ENCODE measurements at regions of chr9 and their contacts with region 1.

Region 1: GRCh38 chr9:114662081-114662989 is 4.7 kb upstream of the TEX53 start:
- DNase-seq: peak; percentile 72
- ATAC-seq: peak; percentile 94
- H3K4me3 ChIP-seq: no peak overlapping the region
- H3K4me3 Mint-ChIP-seq: no peak overlapping the region
- H3K27ac ChIP-seq: no peak overlapping the region
- H3K27ac Mint-ChIP-seq: no peak overlapping the region
- H3K4me1 ChIP-seq: peaks cover 0 to 6% of the 10 kb centered on the region in 2 donors
- H3K4me1 Mint-ChIP-seq: peaks cover 6% of the 10 kb centered on the region
- H3K27me3 ChIP-seq: no peaks in the 10 kb centered on the region
- H3K27me3 Mint-ChIP-seq: peaks cover 5% of the 10 kb centered on the region
- CTCF ChIP-seq: peak; percentile 85

Region 2: GRCh38 chr9:114538241-114538640 is 124.1 kb before region 1 on chr9:
- CTCF ChIA-PET with region 1: interaction called, 3 read pairs
- POLR2A ChIA-PET with region 1: interaction called, 5 read pairs
- intact Hi-C with region 1: loop called (anchors 5 kb)
- DNase-seq: peak; percentile 74
- ATAC-seq: peak; percentile 99
- H3K4me3 ChIP-seq: no peak overlapping the region
- H3K4me3 Mint-ChIP-seq: no peak overlapping the region
- H3K27ac ChIP-seq: peak overlapping the region in 1 of 2 donors; percentile 0
- H3K27ac Mint-ChIP-seq: peak overlapping the region; percentile 38
- H3K4me1 ChIP-seq: peaks cover 8 to 13% of the 10 kb centered on the region in 2 donors
- H3K4me1 Mint-ChIP-seq: peaks cover 27% of the 10 kb centered on the region
- H3K27me3 ChIP-seq: no peaks in the 10 kb centered on the region
- H3K27me3 Mint-ChIP-seq: no peaks in the 10 kb centered on the region
- CTCF ChIP-seq: peak; percentile 68

Region 3: GRCh38 chr9:114681594-114682332 is 19.4 kb after region 1 on chr9 and contains the start of gene TEX48:
- CTCF ChIA-PET with region 1: interaction called, 13 read pairs
- POLR2A ChIA-PET with region 1: no interaction called
- intact Hi-C with region 1: no loop called
- DNase-seq: peak; percentile 75
- ATAC-seq: peak; percentile 89
- H3K4me3 ChIP-seq: no peak within 1 kb of the TSS
- H3K4me3 Mint-ChIP-seq: no peak within 1 kb of the TSS
- H3K27ac ChIP-seq: no peak within 1 kb of the TSS
- H3K27ac Mint-ChIP-seq: no peak within 1 kb of the TSS
- H3K4me1 ChIP-seq: peaks cover 0 to 4% of the 10 kb centered on the region in 2 donors
- H3K4me1 Mint-ChIP-seq: peaks cover 2% of the 10 kb centered on the region
- H3K27me3 ChIP-seq: peaks cover 0 to 15% (median 8%) of the 10 kb centered on the region in 4 experiments
- H3K27me3 Mint-ChIP-seq: peaks cover 39% of the 10 kb centered on the region
- CTCF ChIP-seq: peak; percentile 77
- total RNA-seq, gene TEX48: not detected in 2 replicates

Region 4: GRCh38 chr9:114930056-114930812 is 267.9 kb after region 1 on chr9 and contains the start of gene TNFSF8:
- CTCF ChIA-PET with region 1: no interaction called
- POLR2A ChIA-PET with region 1: interaction called, 11 read pairs
- intact Hi-C with region 1: no loop called
- DNase-seq: peak; percentile 82
- ATAC-seq: peak; percentile 67
- H3K4me3 ChIP-seq: peak within 1 kb of the TSS; percentile 47 to 94 (median 69)
- H3K4me3 Mint-ChIP-seq: peak within 1 kb of the TSS; percentile 83
- H3K27ac ChIP-seq: peak within 1 kb of the TSS; percentile 68 to 77
- H3K27ac Mint-ChIP-seq: peak within 1 kb of the TSS; percentile 84
- H3K4me1 ChIP-seq: peaks cover 37 to 38% of the 10 kb centered on the region in 2 donors
- H3K4me1 Mint-ChIP-seq: peaks cover 43% of the 10 kb centered on the region
- H3K27me3 ChIP-seq: peaks cover 0 to 2% (median under 1%) of the 10 kb centered on the region in 4 experiments
- H3K27me3 Mint-ChIP-seq: peaks cover 15% of the 10 kb centered on the region
- CTCF ChIP-seq: no peak
- total RNA-seq, gene TNFSF8: 1.6 and 1.9 TPM in 2 replicates

Region 5: GRCh38 chr9:115013998-115014397 is 351.7 kb after region 1 on chr9:
- CTCF ChIA-PET with region 1: interaction called, 15 read pairs
- POLR2A ChIA-PET with region 1: no interaction called
- intact Hi-C with region 1: loop called (anchors 5 kb)
- DNase-seq: peak; percentile 81
- ATAC-seq: peak; percentile 65
- H3K4me3 ChIP-seq: no peak overlapping the region
- H3K4me3 Mint-ChIP-seq: no peak overlapping the region
- H3K27ac ChIP-seq: no peak overlapping the region
- H3K27ac Mint-ChIP-seq: no peak overlapping the region
- H3K4me1 ChIP-seq: no peaks in the 10 kb centered on the region
- H3K4me1 Mint-ChIP-seq: peaks cover 3% of the 10 kb centered on the region
- H3K27me3 ChIP-seq: no peaks in the 10 kb centered on the region
- H3K27me3 Mint-ChIP-seq: peaks cover 24% of the 10 kb centered on the region
- CTCF ChIP-seq: peak; percentile 91